ENCODE measurements at regions of chr6 and their contacts with region 1.

Region 1: GRCh38 chr6:16206595-16207037 is 31.8 kb upstream of the GMPR start:
- DNase-seq: no peak
- ATAC-seq: peak; percentile 48
- H3K4me3 Mint-ChIP-seq: peak overlapping the region; percentile 32
- H3K27ac Mint-ChIP-seq: peak overlapping the region; percentile 31
- H3K4me1 Mint-ChIP-seq: peaks cover 27% of the 10 kb centered on the region
- H3K27me3 Mint-ChIP-seq: peaks cover 14% of the 10 kb centered on the region
- CTCF ChIP-seq: peak; percentile 85

Region 2: GRCh38 chr6:15491255-15491985 is 715.2 kb before region 1 on chr6:
- CTCF ChIA-PET with region 1: interaction called, 3 read pairs
- POLR2A ChIA-PET with region 1: no interaction called
- intact Hi-C with region 1: loop called (anchors 1 kb)
- DNase-seq: peak; percentile 35
- ATAC-seq: peak; percentile 82
- H3K4me3 Mint-ChIP-seq: no peak overlapping the region
- H3K27ac Mint-ChIP-seq: no peak overlapping the region
- H3K4me1 Mint-ChIP-seq: peaks cover 32% of the 10 kb centered on the region
- H3K27me3 Mint-ChIP-seq: no peaks in the 10 kb centered on the region
- CTCF ChIP-seq: peak; percentile 95

Region 3: GRCh38 chr6:15662326-15663129 is 544.1 kb before region 1 on chr6 and contains the start of gene DTNBP1:
- CTCF ChIA-PET with region 1: no interaction called
- POLR2A ChIA-PET with region 1: interaction called, 5 read pairs
- intact Hi-C with region 1: loop called (anchors 1 kb)
- DNase-seq: peak; percentile 94
- ATAC-seq: peak; percentile 73
- H3K4me3 Mint-ChIP-seq: peak within 1 kb of the TSS; percentile 87
- H3K27ac Mint-ChIP-seq: peak within 1 kb of the TSS; percentile 89
- H3K4me1 Mint-ChIP-seq: peaks cover 49% of the 10 kb centered on the region
- H3K27me3 Mint-ChIP-seq: no peaks in the 10 kb centered on the region
- CTCF ChIP-seq: no peak
- total RNA-seq, gene DTNBP1: 50.3 and 51.6 TPM in 2 replicates

Region 4: DNA sequence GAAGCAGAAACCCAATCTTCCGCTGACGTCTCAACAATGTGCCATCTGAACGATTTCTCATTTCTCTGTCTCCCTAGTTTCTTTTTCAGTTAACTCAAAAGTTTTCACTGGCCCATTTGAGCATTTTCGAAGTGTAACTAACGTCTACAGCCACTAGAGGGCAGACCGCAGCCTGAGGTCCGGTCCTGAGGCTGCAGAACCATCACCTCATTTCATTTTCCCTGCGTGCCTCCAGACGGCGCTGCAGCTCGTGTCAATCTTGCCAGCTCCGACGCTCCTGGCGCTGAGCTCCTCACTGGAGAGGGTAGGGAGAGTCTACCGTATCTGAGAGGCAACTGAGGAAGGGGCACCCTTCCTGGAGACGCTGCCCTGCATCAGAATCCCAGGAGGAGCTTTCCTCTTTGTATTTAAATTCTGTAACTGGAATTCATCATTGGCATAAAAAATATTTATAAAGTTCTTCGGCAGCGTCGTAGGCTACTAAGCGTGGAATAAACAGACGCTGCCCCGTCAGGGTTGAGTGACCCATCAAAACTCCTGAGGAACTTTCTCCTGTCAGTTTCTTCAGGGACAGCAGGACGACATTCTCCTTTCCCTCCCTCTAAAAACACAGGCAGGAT is 515.3 kb before region 1 on chr6:
- CTCF ChIA-PET with region 1: interaction called, 46 read pairs
- POLR2A ChIA-PET with region 1: no interaction called
- intact Hi-C with region 1: loop called (anchors 1 kb)
- DNase-seq: peak; percentile 64
- ATAC-seq: peak; percentile 99
- H3K4me3 Mint-ChIP-seq: peak overlapping the region; percentile 17
- H3K27ac Mint-ChIP-seq: no peak overlapping the region
- H3K4me1 Mint-ChIP-seq: peaks cover 9% of the 10 kb centered on the region
- H3K27me3 Mint-ChIP-seq: peaks cover 2% of the 10 kb centered on the region
- CTCF ChIP-seq: peak; percentile 95

Region 5: GRCh38 chr6:15754035-15754705 is 452.4 kb before region 1 on chr6:
- CTCF ChIA-PET with region 1: no interaction called
- POLR2A ChIA-PET with region 1: no interaction called
- intact Hi-C with region 1: no loop called
- DNase-seq: no peak
- ATAC-seq: no peak
- H3K4me3 Mint-ChIP-seq: no peak overlapping the region
- H3K27ac Mint-ChIP-seq: no peak overlapping the region
- H3K4me1 Mint-ChIP-seq: no peaks in the 10 kb centered on the region
- H3K27me3 Mint-ChIP-seq: no peaks in the 10 kb centered on the region
- CTCF ChIP-seq: no peak

Region 6: GRCh38 chr6:15893556-15894268 is 312.9 kb before region 1 on chr6:
- CTCF ChIA-PET with region 1: no interaction called
- POLR2A ChIA-PET with region 1: no interaction called
- intact Hi-C with region 1: loop called (anchors 1 kb)
- DNase-seq: no peak
- ATAC-seq: no peak
- H3K4me3 Mint-ChIP-seq: no peak overlapping the region
- H3K27ac Mint-ChIP-seq: no peak overlapping the region
- H3K4me1 Mint-ChIP-seq: peaks cover 24% of the 10 kb centered on the region
- H3K27me3 Mint-ChIP-seq: no peaks in the 10 kb centered on the region
- CTCF ChIP-seq: no peak

Region 7: GRCh38 chr6:16183187-16183664 is 23.4 kb before region 1 on chr6:
- CTCF ChIA-PET with region 1: interaction called, 31 read pairs
- POLR2A ChIA-PET with region 1: no interaction called
- intact Hi-C with region 1: loop called (anchors 1 kb)
- DNase-seq: no peak
- ATAC-seq: peak; percentile 56
- H3K4me3 Mint-ChIP-seq: no peak overlapping the region
- H3K27ac Mint-ChIP-seq: no peak overlapping the region
- H3K4me1 Mint-ChIP-seq: peaks cover 19% of the 10 kb centered on the region
- H3K27me3 Mint-ChIP-seq: no peaks in the 10 kb centered on the region
- CTCF ChIP-seq: peak; percentile 35

Measured in activated B cell treated with CpG ODN at 0.5 μM for 24 hours (primary cell).